Common myeloid progenitor, CD34-positive (primary cell): ENCODE measurements at regions of chrX and their contacts with region 1.

Region 1: DNA sequence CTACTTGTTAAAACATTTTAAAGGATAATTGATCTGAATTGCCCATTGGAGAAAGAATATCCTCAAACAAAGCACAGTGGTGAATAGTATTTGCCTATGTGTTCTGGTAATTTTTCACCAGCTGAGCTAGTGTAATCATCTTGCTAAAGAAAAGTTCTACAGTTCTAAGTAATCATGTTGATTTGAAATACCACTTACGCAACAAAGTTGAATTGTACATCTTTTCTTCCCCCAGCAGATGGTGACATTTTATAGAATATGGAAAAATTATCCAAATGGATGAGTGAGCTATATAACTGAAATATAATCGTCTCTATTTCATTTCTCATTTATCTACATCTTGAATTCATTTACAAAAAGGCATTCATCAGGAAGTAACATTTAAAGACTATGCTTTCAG is 9.7 kb upstream of the ZNF674 start:
- DNase-seq: peak in 2 of 3 donors; percentile 50 to 59
- H3K4me3 ChIP-seq: no peak overlapping the region
- H3K27ac ChIP-seq: no peak overlapping the region
- H3K4me1 ChIP-seq: peaks cover 0 to 2% (median 0%) of the 10 kb centered on the region in 4 experiments
- H3K27me3 ChIP-seq: peaks cover 0 to 2% (median 0%) of the 10 kb centered on the region in 5 experiments

Region 2: DNA sequence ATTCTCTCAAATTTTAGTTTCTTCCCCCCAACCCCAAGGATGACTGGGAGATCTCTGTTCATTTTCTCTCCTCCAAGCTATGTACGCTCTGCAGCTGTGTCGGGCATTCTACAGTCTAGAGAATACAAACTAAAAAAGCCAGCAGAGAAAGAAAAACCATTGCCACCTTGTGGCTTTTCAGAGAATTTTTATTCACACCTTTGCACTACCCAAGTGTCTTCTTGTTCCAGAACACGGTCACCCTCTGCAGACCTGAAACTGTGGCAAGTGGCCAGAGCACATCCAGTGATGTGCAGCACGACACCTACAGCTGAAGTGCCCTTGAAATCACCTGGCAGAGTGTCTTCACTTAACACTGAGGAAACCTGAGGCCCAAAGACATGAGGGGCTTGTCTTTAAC is 87.2 kb after region 1 on chrX:
- CTCF ChIA-PET with region 1: interaction called, 16 read pairs
- POLR2A ChIA-PET with region 1: no interaction called
- DNase-seq: peak; percentile 13 to 50 (median 43)
- H3K4me3 ChIP-seq: no peak overlapping the region
- H3K27ac ChIP-seq: no peak overlapping the region
- H3K4me1 ChIP-seq: peaks cover 0 to 4% (median 0%) of the 10 kb centered on the region in 4 experiments
- H3K27me3 ChIP-seq: peaks cover 0 to 7% (median 0%) of the 10 kb centered on the region in 5 experiments